Transverse colon (tissue), 4 donors: ENCODE measurements at regions of chr1 and their contacts with region 1.

Region 1: GRCh38 chr1:71587961-71588360 is 507.1 kb upstream of the ZRANB2 start:
- DNase-seq: no peak
- H3K4me3 ChIP-seq: no peak overlapping the region
- H3K27ac ChIP-seq: no peak overlapping the region
- H3K4me1 ChIP-seq: peaks cover 0 to 9% (median 2%) of the 10 kb centered on the region in 4 donors
- H3K27me3 ChIP-seq: no peaks in the 10 kb centered on the region
- CTCF ChIP-seq: peak; percentile 34 to 46 (median 41)
- EP300 ChIP-seq: no peak
- POLR2A ChIP-seq: no peak

Region 2: GRCh38 chr1:70459496-70460225 is 1128.3 kb before region 1 on chr1:
- in situ Hi-C with region 1: no loop called
- intact Hi-C with region 1: no loop called
- DNase-seq: no peak
- H3K4me3 ChIP-seq: no peak overlapping the region
- H3K27ac ChIP-seq: no peak overlapping the region
- H3K4me1 ChIP-seq: peaks cover 0 to 5% (median 0%) of the 10 kb centered on the region in 4 donors
- H3K27me3 ChIP-seq: no peaks in the 10 kb centered on the region
- CTCF ChIP-seq: no peak
- EP300 ChIP-seq: no peak
- POLR2A ChIP-seq: no peak

Region 3: DNA sequence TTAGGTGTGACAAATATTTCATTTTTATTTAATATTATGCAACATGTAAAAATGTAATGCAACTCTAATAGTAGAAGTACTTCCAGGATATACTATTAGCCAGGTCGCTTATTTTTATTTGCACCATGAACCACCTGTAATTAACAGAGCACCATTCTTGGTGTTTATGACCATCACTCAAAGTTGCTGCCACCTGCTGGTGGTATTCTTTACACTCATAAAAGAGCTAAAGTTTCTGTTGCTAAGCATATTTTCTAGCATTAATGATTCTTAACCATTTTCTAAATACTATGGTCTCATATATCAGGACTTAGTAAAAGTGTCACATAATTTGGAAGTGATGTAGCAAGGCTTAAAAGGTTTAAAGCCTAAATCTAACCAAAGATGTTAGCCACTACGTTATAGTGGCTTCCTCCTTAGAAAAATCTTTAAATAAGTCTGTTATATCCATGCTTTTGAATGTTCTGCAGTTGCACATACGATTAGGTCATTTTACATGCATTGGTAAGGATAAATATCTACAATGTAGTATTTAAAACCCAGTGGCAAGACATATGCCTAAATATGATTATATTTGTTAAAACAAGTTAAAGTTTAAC is 449.9 kb after region 1 on chr1:
- in situ Hi-C with region 1: loop called in 3 of 4 experiments (anchors 10 to 25 kb)
- intact Hi-C with region 1: no loop called
- DNase-seq: peak; percentile 32
- H3K4me3 ChIP-seq: no peak overlapping the region
- H3K27ac ChIP-seq: no peak overlapping the region
- H3K4me1 ChIP-seq: no peaks in the 10 kb centered on the region
- H3K27me3 ChIP-seq: no peaks in the 10 kb centered on the region
- CTCF ChIP-seq: peak; percentile 45 to 61 (median 55)
- EP300 ChIP-seq: no peak
- POLR2A ChIP-seq: no peak